ENCODE measurements at regions of chr1 and their contacts with region 1.

Region 1: GRCh38 chr1:222455188-222455879 is 92.6 kb downstream of the HHIPL2 start:
- DNase-seq: peak; percentile 75
- CTCF ChIP-seq: peak; percentile 97

Region 2: GRCh38 chr1:221263831-221264767 is 1191.2 kb before region 1 on chr1:
- CTCF ChIA-PET with region 1: interaction called, 17 read pairs
- POLR2A ChIA-PET with region 1: no interaction called
- DNase-seq: peak; percentile 42
- CTCF ChIP-seq: peak; percentile 37

Region 3: DNA sequence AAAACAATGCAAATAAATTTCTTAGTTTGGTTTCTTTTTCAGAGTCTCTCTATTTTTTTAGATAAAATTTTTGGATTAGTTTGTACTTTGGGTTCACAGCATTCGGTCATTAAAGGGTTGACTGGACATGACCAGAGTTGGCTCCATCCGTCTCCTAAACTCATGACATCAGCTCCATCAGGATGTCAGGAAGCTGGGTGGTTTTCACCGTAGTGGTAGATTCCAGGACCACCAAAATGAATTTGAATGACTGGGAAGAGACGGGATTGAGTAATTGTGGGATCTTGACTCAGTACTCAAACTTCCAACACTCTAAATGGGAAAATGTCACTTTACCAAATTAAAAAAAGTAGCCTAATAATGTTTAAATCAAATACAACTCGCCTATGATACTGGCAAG is 434.2 kb before region 1 on chr1:
- CTCF ChIA-PET with region 1: no interaction called
- POLR2A ChIA-PET with region 1: interaction called, 11 read pairs
- DNase-seq: no peak
- CTCF ChIP-seq: no peak

Region 4: GRCh38 chr1:222095606-222096475 is 359.5 kb before region 1 on chr1:
- CTCF ChIA-PET with region 1: interaction called, 19 read pairs
- POLR2A ChIA-PET with region 1: no interaction called
- DNase-seq: peak; percentile 65
- CTCF ChIP-seq: peak; percentile 85

Region 5: GRCh38 chr1:222441066-222441465 is 14.3 kb before region 1 on chr1:
- CTCF ChIA-PET with region 1: interaction called, 52 read pairs
- POLR2A ChIA-PET with region 1: no interaction called
- DNase-seq: no peak
- CTCF ChIP-seq: no peak

Region 6: DNA sequence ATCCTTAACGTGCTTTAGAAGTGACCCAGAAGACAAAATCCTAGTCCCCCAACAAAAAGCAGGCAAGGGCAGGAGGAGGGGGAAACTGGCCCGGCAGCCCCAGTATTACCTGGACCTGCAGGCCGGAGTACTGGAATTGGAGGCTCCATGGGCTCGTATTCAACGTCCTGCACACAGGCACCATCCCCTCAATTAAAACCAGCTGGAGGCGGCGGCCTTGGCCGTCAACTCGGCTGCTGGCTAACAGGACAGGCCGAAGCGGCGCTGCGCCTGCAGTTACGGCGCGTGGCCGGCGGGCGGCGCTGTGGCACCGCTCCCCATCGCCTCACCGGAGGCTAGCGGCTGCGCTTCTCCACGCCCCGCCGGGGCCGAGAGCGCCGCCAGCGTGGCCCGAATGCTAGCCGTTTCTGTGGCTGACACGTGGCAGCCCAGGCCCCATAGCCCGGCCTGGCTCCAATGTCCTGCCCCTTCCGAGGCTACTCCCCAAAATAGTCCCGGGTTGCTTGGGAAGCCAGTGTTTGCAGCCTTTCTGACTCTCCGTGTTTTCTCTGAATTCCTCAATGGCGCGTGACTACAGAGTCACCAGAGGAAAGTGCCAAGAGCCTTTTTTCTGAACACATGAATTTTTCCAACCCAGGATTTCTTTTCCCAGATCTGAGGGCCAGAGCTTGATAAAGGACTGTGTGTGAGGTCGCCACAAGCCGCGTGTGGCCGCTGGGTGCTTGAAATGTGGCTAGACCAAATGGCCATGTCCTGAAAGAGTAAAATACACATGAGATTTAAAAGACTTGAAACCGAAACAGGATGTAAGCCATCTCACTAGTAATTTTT is 10.1 kb after region 1 on chr1:
- CTCF ChIA-PET with region 1: interaction called, 67 read pairs
- POLR2A ChIA-PET with region 1: no interaction called
- DNase-seq: peak; percentile 90
- CTCF ChIP-seq: peak; percentile 100

Region 7: GRCh38 chr1:223041473-223041872 is 586.1 kb after region 1 on chr1:
- CTCF ChIA-PET with region 1: no interaction called
- POLR2A ChIA-PET with region 1: no interaction called
- DNase-seq: no peak
- CTCF ChIP-seq: no peak

Measured in GM10248 (cell line).